Naive thymus-derived CD4-positive, alpha-beta T cell (primary cell): ENCODE measurements at regions of chr1 and their contacts with region 1.

Region 1: DNA sequence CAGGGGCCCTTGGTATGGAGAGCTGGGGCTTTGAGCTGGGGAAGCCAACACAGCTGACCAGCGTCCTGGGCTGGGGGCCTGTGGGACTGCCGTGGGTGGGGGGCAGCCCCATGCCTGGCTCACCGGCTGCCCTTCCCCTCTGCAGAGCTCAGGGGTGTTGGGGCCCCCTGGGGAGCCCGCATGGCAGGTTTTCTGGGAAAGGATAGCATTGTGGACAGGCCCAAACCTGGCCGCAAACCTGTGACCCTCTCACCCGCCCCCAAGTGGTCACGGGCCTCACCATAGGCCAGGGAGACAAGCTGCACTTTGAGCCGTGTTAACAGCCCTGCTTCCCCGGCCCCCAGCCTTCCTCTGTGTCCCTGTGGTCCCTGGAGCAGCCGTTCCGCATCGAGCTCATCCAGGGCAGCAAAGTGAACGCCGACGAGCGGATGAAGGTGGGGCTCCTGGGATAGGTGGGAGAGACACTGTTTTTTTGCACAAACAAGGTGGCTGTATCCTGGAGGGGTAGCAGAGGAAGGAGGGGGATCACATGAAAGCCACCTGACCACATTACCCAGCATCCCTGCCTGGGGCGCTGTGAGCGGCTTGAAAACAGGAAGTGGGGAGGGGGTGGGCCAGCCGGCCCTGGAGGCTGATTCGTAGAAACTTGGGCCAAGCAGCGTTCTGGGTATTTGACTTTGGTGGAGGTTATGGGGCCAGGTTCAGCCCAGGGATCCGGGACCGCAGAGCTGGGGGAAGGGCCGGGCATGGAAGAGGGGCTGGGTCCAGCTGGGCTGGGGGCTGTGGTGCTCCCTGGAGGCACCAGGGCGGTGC is 65.9 kb downstream of the PIK3CD start:
- DNase-seq: peak; percentile 63 to 95 (median 94)
- ATAC-seq: peak; percentile 90
- H3K4me3 ChIP-seq: peak overlapping the region; percentile 76
- H3K4me3 Mint-ChIP-seq: peak overlapping the region; percentile 80 to 98 (median 94)
- H3K27ac ChIP-seq: peak overlapping the region; percentile 63
- H3K27ac Mint-ChIP-seq: peak overlapping the region; percentile 90 to 99 (median 95)
- H3K4me1 ChIP-seq: peaks cover 60 to 87% of the 10 kb centered on the region in 2 donors
- H3K4me1 Mint-ChIP-seq: peaks cover 26 to 82% (median 66%) of the 10 kb centered on the region in 7 donors
- H3K27me3 ChIP-seq: no peaks in the 10 kb centered on the region
- H3K27me3 Mint-ChIP-seq: no peaks in the 10 kb centered on the region

Region 2: GRCh38 chr1:9573723-9574122 is 143.7 kb before region 1 on chr1:
- CTCF ChIA-PET with region 1: no interaction called
- POLR2A ChIA-PET with region 1: no interaction called
- intact Hi-C with region 1: no loop called
- DNase-seq: peak in 3 of 9 donors; percentile 29 to 44 (median 33)
- ATAC-seq: no peak
- H3K4me3 ChIP-seq: no peak overlapping the region
- H3K4me3 Mint-ChIP-seq: no peak overlapping the region
- H3K27ac ChIP-seq: no peak overlapping the region
- H3K27ac Mint-ChIP-seq: peak overlapping the region in 2 of 9 donors; percentile 23 to 36
- H3K4me1 ChIP-seq: no peaks in the 10 kb centered on the region
- H3K4me1 Mint-ChIP-seq: no peaks in the 10 kb centered on the region
- H3K27me3 ChIP-seq: no peaks in the 10 kb centered on the region
- H3K27me3 Mint-ChIP-seq: no peaks in the 10 kb centered on the region

Region 3: DNA sequence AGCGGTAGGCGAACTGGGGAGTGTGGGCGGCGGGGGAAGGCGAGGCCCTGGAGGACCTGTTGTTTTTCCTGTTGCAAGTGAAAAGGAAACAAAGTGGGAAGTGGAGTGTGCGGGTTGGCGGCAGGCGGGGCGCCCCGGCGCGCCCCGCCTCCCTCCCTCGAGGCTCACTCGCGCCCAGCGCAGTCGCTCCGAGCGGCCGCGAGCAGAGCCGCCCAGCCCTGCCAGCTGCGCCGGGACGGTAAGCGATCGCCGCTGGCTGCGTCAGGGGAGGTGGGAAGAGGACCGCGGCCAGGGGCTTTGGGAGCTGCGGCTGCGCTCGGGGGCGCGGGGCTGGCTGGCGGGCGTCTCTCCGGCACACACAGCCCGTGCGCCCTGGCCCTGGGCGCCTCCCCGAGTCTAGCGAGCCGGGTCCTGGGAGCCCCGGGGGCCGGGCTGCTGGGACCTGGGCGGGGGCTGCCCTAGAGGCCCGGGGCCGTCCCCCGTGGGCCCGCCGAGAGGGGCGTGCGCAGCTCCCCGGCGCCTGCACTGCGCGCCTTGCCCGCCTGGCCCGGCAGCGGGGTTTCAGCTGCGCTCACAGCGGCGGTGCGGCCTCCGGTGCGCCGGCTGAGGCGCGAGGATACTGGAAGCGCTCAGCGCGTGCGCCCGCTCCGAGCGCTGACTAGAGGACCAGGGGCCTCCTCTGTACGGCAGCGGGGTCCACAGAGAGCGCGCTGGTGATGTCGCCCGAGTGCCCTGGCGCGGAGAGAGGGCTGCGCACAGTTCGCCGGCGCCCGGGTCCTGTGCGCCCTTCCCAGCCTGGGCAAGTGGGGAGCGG is 65.6 kb before region 1 on chr1 and contains the start of gene PIK3CD:
- CTCF ChIA-PET with region 1: interaction called, 28 read pairs
- POLR2A ChIA-PET with region 1: interaction called, 280 read pairs
- intact Hi-C with region 1: loop called (anchors 1 kb)
- DNase-seq: peak in 6 of 9 donors; percentile 14 to 59 (median 32)
- ATAC-seq: peak; percentile 49
- H3K4me3 ChIP-seq: peak within 1 kb of the TSS; percentile 84
- H3K4me3 Mint-ChIP-seq: peak within 1 kb of the TSS; percentile 96 to 100 (median 99)
- H3K27ac ChIP-seq: peak within 1 kb of the TSS; percentile 79
- H3K27ac Mint-ChIP-seq: peak within 1 kb of the TSS; percentile 95 to 99 (median 98)
- H3K4me1 ChIP-seq: peaks cover 27 to 46% of the 10 kb centered on the region in 2 donors
- H3K4me1 Mint-ChIP-seq: peaks cover 26 to 70% (median 61%) of the 10 kb centered on the region in 7 donors
- H3K27me3 ChIP-seq: no peaks in the 10 kb centered on the region
- H3K27me3 Mint-ChIP-seq: no peaks in the 10 kb centered on the region
- total RNA-seq, gene PIK3CD: 269 to 313 (median 283) TPM

Region 4: GRCh38 chr1:9699361-9699760 is 18.0 kb before region 1 on chr1:
- CTCF ChIA-PET with region 1: interaction called, 8 read pairs
- POLR2A ChIA-PET with region 1: interaction called, 71 read pairs
- intact Hi-C with region 1: loop called in 1 of 2 experiments (anchors 1 kb)
- DNase-seq: no peak
- ATAC-seq: no peak
- H3K4me3 ChIP-seq: no peak overlapping the region
- H3K4me3 Mint-ChIP-seq: peak overlapping the region in 4 of 10 donors; percentile 3 to 60 (median 23)
- H3K27ac ChIP-seq: no peak overlapping the region
- H3K27ac Mint-ChIP-seq: peak overlapping the region in 8 of 9 donors; percentile 21 to 86 (median 64)
- H3K4me1 ChIP-seq: peaks cover 19 to 36% of the 10 kb centered on the region in 2 donors
- H3K4me1 Mint-ChIP-seq: peaks cover 38 to 80% (median 65%) of the 10 kb centered on the region in 7 donors
- H3K27me3 ChIP-seq: no peaks in the 10 kb centered on the region
- H3K27me3 Mint-ChIP-seq: no peaks in the 10 kb centered on the region

Region 5: DNA sequence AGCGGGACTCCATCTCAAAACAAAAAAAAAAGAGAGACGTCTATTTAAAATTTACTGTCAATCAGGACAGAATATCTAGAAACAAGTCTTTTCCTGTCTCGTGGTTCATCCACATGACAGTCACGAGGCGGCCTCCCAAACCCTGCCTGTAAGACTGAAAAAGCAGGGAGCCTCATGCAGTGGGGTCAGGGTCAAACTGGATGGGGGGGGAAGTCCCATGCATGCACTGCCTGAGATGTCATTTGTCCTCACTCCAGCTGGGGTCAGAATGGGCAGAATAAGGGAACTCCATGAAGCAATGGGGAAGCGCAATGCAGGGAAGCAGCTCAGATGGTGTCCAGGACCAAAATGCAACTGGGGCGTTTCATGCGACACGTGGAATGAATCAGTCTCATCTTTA is 19.7 kb after region 1 on chr1:
- CTCF ChIA-PET with region 1: interaction called, 3 read pairs
- POLR2A ChIA-PET with region 1: interaction called, 192 read pairs
- intact Hi-C with region 1: no loop called
- DNase-seq: no peak
- ATAC-seq: no peak
- H3K4me3 ChIP-seq: no peak overlapping the region
- H3K4me3 Mint-ChIP-seq: peak overlapping the region in 6 of 10 donors; percentile 12 to 52 (median 19)
- H3K27ac ChIP-seq: no peak overlapping the region
- H3K27ac Mint-ChIP-seq: peak overlapping the region; percentile 4 to 91 (median 72)
- H3K4me1 ChIP-seq: peaks cover 0 to 20% of the 10 kb centered on the region in 2 donors
- H3K4me1 Mint-ChIP-seq: peaks cover 12 to 52% (median 34%) of the 10 kb centered on the region in 7 donors
- H3K27me3 ChIP-seq: no peaks in the 10 kb centered on the region
- H3K27me3 Mint-ChIP-seq: no peaks in the 10 kb centered on the region

Region 6: DNA sequence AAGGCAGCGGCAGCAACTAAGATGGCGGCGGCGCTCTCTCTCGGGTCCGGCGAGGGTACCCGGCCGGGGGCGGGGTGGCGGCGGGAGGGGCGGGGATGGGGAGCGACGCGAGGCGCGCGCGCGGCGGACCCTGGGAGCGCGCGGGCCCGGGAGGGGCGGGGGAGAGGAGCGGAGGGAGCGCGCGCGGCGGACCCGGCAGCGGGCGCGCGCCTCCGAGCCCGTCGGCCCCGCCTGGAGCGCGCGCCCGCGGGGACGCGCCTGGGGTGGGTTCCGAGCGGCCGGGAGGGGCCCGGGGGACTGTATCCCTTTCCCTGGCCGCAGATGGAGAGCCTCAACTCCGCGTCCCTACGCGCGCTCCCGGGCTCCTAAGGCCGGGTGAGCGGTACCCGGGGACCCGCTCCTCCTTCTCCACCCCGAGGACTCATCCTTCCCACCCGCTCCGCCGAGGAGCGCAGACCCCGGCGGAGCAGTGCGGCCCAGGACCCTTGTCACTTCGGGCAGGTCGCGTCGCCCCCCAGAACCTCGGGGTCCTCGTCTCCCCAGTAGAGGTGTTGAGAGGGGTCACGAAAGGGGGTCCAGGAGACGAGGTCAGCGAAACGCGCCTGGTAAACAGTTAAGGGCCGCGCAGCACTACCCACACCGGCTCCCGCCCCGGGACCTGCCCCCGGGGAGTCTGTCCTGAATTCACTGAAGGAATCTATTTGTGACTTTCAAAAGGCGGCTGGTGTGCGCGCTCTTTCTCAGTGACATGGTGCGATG is 106.7 kb after region 1 on chr1 and contains the start of gene CLSTN1:
- CTCF ChIA-PET with region 1: no interaction called
- POLR2A ChIA-PET with region 1: interaction called, 4 read pairs
- intact Hi-C with region 1: loop called in 1 of 2 experiments (anchors 5 kb)
- DNase-seq: peak; percentile 73 to 88 (median 84)
- ATAC-seq: peak; percentile 86
- H3K4me3 ChIP-seq: peak within 1 kb of the TSS; percentile 82
- H3K4me3 Mint-ChIP-seq: peak within 1 kb of the TSS; percentile 95 to 99 (median 98)
- H3K27ac ChIP-seq: peak within 1 kb of the TSS; percentile 68
- H3K27ac Mint-ChIP-seq: peak within 1 kb of the TSS; percentile 80 to 97 (median 93)
- H3K4me1 ChIP-seq: peaks cover 24 to 34% of the 10 kb centered on the region in 2 donors
- H3K4me1 Mint-ChIP-seq: peaks cover 31 to 52% (median 46%) of the 10 kb centered on the region in 7 donors
- H3K27me3 ChIP-seq: no peaks in the 10 kb centered on the region
- H3K27me3 Mint-ChIP-seq: peaks cover 0 to 3% (median 0%) of the 10 kb centered on the region in 5 donors
- total RNA-seq, gene CLSTN1: 68.6 to 116 (median 85.6) TPM